Mammary epithelial cell (primary cell): ENCODE measurements at regions of chr1 and their contacts with region 1.

Region 1: GRCh38 chr1:26949926-26950319 is 10.3 kb downstream of the KDF1 start:
- DNase-seq: peak; percentile 26
- H3K4me3 ChIP-seq: no peak overlapping the region
- H3K27ac ChIP-seq: no peak overlapping the region
- H3K4me1 ChIP-seq: peaks cover 7% of the 10 kb centered on the region
- H3K27me3 ChIP-seq: no peaks in the 10 kb centered on the region
- CTCF ChIP-seq: no peak

Region 2: DNA sequence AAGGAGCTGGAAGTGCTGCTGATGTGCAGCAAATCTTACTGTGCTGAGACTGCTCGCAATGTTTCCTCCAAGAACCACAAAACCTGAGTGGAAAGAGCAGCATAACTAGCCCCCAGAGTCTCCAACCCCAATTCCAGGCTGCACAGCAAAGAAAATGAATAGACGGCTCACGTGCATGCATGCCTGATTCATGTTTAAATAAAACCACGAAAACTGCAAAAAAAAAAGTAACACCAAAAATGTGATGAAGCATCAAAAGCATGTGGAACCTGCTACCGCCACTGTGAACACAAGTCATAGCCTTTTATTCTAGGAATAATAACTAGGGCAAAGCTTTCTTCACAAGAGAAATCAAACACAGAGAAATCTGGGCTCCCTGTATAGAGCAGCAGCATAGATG is 33.9 kb after region 1 on chr1:
- CTCF ChIA-PET with region 1: no interaction called
- dilution Hi-C with region 1: loop called (anchors 5 kb)
- in situ Hi-C with region 1: no loop called
- intact Hi-C with region 1: no loop called
- DNase-seq: no peak
- H3K4me3 ChIP-seq: no peak overlapping the region
- H3K27ac ChIP-seq: no peak overlapping the region
- H3K4me1 ChIP-seq: no peaks in the 10 kb centered on the region
- H3K27me3 ChIP-seq: no peaks in the 10 kb centered on the region
- CTCF ChIP-seq: no peak

Region 3: GRCh38 chr1:27192039-27192529 is 242.2 kb after region 1 on chr1:
- CTCF ChIA-PET with region 1: no interaction called
- dilution Hi-C with region 1: no loop called
- in situ Hi-C with region 1: no loop called
- intact Hi-C with region 1: no loop called
- DNase-seq: peak; percentile 41
- H3K4me3 ChIP-seq: no peak overlapping the region
- H3K27ac ChIP-seq: no peak overlapping the region
- H3K4me1 ChIP-seq: peaks cover 14% of the 10 kb centered on the region
- H3K27me3 ChIP-seq: no peaks in the 10 kb centered on the region
- CTCF ChIP-seq: no peak